CD4-positive, alpha-beta T cell (primary cell): ENCODE measurements at regions of chr22 and their contacts with region 1.

Region 1: DNA sequence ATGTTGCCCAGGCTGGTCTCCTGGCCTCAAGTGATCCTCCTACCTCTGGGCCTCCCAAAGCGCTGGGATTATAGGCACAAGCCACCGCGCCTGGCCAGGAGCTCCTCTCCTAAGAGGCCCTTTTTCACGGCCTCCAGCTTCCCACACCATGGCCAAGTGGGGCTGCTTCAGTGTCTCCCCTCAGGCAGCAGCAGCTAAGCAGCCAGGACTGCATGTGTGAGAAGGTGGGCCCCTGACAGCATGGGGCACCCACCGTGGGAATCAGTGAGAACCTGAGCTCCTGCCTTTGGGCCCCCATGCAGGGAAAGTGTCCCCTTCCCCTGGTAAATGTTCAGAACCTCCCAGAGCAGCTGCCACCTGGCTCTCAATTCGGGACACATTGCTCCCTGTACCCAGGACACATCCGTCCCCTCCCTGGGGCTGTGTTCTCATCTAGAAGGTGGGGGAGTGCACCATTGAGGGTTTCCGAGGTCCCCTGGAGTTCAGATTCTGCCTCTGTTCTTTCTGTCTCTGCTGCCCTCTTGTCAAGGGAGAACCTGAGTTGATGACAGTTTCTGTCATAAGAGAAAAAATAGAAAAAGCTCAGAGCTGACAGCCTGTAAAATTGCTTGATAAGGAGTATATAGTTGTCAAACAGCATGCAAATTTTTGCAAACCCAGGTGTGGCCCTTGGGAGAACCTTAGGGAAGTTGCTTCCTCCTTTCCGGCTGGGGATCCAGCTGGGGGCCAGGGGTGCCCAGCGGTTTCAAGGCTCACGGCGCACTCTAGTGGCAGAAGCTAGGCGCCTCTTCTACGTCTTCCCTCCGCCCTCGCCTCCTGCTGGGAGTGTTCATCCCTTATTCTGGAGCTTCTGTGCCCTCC is 29.7 kb downstream of the FAM83F start:
- DNase-seq: peak; percentile 40 to 80 (median 53)
- ATAC-seq: peak; percentile 82
- H3K4me3 ChIP-seq: no peak overlapping the region
- H3K4me3 Mint-ChIP-seq: no peak overlapping the region
- H3K27ac ChIP-seq: no peak overlapping the region
- H3K27ac Mint-ChIP-seq: no peak overlapping the region
- H3K4me1 ChIP-seq: peaks cover 7% of the 10 kb centered on the region
- H3K4me1 Mint-ChIP-seq: peaks cover 4% of the 10 kb centered on the region
- H3K27me3 ChIP-seq: no peaks in the 10 kb centered on the region
- H3K27me3 Mint-ChIP-seq: no peaks in the 10 kb centered on the region
- CTCF ChIP-seq: peak; percentile 93

Region 2: GRCh38 chr22:39559454-39560105 is 464.9 kb before region 1 on chr22:
- CTCF ChIA-PET with region 1: interaction called, 6 read pairs
- POLR2A ChIA-PET with region 1: interaction called, 7 read pairs
- intact Hi-C with region 1: loop called in 1 of 2 experiments (anchors 1 kb)
- DNase-seq: peak in 1 of 14 experiments; percentile 24
- ATAC-seq: no peak
- H3K4me3 ChIP-seq: no peak overlapping the region
- H3K4me3 Mint-ChIP-seq: no peak overlapping the region
- H3K27ac ChIP-seq: no peak overlapping the region
- H3K27ac Mint-ChIP-seq: no peak overlapping the region
- H3K4me1 ChIP-seq: peaks cover 15% of the 10 kb centered on the region
- H3K4me1 Mint-ChIP-seq: no peaks in the 10 kb centered on the region
- H3K27me3 ChIP-seq: peaks cover 29 to 38% of the 10 kb centered on the region in 2 experiments
- H3K27me3 Mint-ChIP-seq: peaks cover 19% of the 10 kb centered on the region
- CTCF ChIP-seq: no peak

Region 3: DNA sequence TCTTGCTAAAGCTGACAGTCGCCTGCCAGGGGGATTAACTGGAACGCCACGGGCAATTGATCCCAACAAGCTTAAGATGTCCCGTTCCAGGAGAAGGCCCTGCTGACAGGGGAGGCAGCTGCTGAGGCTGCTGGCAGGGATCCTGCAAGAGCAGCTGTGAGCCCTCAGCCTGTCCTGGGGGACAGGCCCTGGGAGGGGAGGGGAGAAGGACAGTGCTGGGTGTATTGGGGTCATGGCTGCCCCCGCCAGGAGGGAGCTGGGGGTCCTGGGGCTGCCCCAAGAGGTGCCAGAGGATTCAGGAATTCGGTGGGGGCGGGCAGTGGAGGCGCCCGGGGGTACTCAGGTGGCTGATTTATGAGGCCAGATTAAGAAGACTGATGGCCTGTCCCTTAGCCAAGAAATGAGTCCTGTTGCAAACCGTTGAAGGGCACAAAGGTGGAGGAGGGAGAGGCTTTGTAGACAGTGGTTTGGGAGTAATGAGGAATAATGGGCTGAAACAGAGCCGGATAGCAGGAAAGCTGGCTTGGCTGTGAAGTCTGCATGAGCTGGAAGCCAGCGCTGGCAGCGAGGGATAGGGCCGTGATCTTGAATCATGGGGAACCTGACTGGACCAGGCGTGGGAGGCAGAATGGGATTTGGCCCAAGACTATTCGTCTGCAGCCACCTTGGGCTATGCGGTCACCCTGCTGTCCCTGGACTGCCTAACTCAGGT is 320.3 kb before region 1 on chr22:
- CTCF ChIA-PET with region 1: no interaction called
- POLR2A ChIA-PET with region 1: no interaction called
- intact Hi-C with region 1: loop called in 1 of 2 experiments (anchors 10 kb)
- DNase-seq: no peak
- ATAC-seq: no peak
- H3K4me3 ChIP-seq: no peak overlapping the region
- H3K4me3 Mint-ChIP-seq: no peak overlapping the region
- H3K27ac ChIP-seq: no peak overlapping the region
- H3K27ac Mint-ChIP-seq: no peak overlapping the region
- H3K4me1 ChIP-seq: no peaks in the 10 kb centered on the region
- H3K4me1 Mint-ChIP-seq: no peaks in the 10 kb centered on the region
- H3K27me3 ChIP-seq: no peaks in the 10 kb centered on the region
- H3K27me3 Mint-ChIP-seq: no peaks in the 10 kb centered on the region
- CTCF ChIP-seq: no peak

Region 4: DNA sequence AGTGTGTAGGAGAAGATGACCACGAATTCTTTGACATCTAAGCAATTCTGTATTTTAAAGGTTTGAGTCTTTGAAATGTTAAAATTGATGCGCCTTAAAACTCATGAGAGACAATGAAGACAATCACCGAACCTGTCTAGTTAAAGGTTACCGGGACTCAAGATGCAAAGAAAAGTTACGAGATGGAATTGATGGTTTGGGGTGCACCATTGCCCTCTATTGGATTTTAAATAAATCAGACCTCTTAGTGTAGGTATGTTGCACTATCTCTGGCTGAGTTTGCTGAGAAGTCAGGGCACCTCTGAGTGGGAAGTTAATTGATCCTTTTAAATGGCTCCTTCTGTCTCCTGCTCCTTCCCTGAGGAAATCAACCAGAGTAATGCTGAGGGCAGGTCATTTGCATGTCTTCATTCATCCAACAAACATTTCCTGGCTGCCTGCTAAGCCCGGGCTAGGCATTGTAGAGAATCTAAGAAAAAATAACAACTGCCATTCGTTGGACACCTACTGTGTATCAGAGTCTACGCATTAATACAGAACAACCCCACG is 83.6 kb before region 1 on chr22:
- CTCF ChIA-PET with region 1: interaction called, 15 read pairs
- POLR2A ChIA-PET with region 1: interaction called, 4 read pairs
- intact Hi-C with region 1: loop called in 1 of 2 experiments (anchors 2 kb)
- DNase-seq: peak in 4 of 14 experiments; percentile 50 to 85 (median 78)
- ATAC-seq: peak; percentile 63
- H3K4me3 ChIP-seq: no peak overlapping the region
- H3K4me3 Mint-ChIP-seq: peak overlapping the region; percentile 59
- H3K27ac ChIP-seq: peak overlapping the region; percentile 42 to 68
- H3K27ac Mint-ChIP-seq: no peak overlapping the region
- H3K4me1 ChIP-seq: peaks cover 95% of the 10 kb centered on the region
- H3K4me1 Mint-ChIP-seq: peaks cover 95% of the 10 kb centered on the region
- H3K27me3 ChIP-seq: no peaks in the 10 kb centered on the region
- H3K27me3 Mint-ChIP-seq: no peaks in the 10 kb centered on the region
- CTCF ChIP-seq: peak; percentile 66

Region 5: DNA sequence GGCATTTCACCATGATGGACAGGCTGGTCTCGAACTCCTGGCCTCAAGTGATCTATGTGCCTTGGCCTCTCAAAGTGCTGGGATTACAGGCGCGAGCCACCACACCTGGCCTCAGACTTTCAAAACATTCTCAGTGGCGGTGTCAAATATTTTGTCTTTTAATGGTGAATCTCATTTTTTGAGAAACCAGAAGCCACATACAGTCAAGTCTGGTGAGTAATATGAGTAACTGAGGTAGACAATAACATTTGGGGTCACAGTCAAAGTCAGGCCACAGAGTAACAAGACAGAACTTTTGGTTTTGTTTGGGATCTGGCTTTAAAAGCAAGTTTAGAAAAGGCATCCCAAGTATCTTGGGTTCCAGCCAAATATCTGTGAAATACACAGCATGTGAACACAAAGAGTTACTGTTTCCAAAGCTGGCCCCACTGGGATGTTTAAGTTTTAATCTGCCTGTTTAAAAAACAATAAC is 69.8 kb before region 1 on chr22:
- CTCF ChIA-PET with region 1: interaction called, 5 read pairs
- POLR2A ChIA-PET with region 1: no interaction called
- intact Hi-C with region 1: loop called (anchors 5 kb)
- DNase-seq: no peak
- ATAC-seq: no peak
- H3K4me3 ChIP-seq: no peak overlapping the region
- H3K4me3 Mint-ChIP-seq: no peak overlapping the region
- H3K27ac ChIP-seq: no peak overlapping the region
- H3K27ac Mint-ChIP-seq: no peak overlapping the region
- H3K4me1 ChIP-seq: peaks cover 95% of the 10 kb centered on the region
- H3K4me1 Mint-ChIP-seq: peaks cover 89% of the 10 kb centered on the region
- H3K27me3 ChIP-seq: no peaks in the 10 kb centered on the region
- H3K27me3 Mint-ChIP-seq: no peaks in the 10 kb centered on the region
- CTCF ChIP-seq: no peak

Region 6: GRCh38 chr22:39973656-39974055 is 50.8 kb before region 1 on chr22:
- CTCF ChIA-PET with region 1: interaction called, 4 read pairs
- POLR2A ChIA-PET with region 1: no interaction called
- intact Hi-C with region 1: loop called in 1 of 2 experiments (anchors 5 kb)
- DNase-seq: no peak
- ATAC-seq: no peak
- H3K4me3 ChIP-seq: no peak overlapping the region
- H3K4me3 Mint-ChIP-seq: no peak overlapping the region
- H3K27ac ChIP-seq: no peak overlapping the region
- H3K27ac Mint-ChIP-seq: no peak overlapping the region
- H3K4me1 ChIP-seq: no peaks in the 10 kb centered on the region
- H3K4me1 Mint-ChIP-seq: peaks cover 10% of the 10 kb centered on the region
- H3K27me3 ChIP-seq: no peaks in the 10 kb centered on the region
- H3K27me3 Mint-ChIP-seq: no peaks in the 10 kb centered on the region
- CTCF ChIP-seq: no peak